Activated B cell treated with CpG ODN at 0.5 μM for 24 hours (primary cell): ENCODE measurements at regions of chr2 and their contacts with region 1.

Region 1: DNA sequence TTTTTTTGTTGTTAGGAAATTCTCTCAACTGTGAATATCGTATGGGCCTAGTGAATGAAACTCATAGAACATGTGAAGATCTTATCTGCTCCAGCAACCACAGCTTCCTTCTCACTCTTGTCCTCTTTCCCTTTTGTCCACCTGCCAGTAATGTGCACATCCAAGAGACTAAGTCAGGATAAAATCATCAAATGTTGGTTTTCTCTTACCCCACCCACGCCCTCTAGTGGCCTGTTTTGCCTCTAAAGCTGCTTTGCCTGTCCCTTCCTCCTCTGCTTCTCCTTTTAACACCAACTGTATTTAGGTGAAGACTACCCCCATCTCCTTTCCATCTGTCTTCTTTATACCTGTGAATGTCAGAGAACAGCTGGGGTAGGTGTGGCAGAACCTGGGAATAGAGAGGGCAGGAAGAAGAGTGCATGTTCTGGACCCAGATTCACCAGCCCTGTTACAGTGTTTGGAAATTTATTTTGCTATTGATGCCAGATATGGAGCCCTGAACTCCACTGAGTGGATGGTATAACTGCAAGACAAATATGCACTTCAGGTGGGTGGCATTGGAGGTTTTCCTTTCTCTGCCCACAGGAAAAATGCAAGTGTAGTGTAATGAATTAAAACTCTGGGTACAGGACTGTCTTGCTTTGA is 8.4 kb upstream of the MGAT5 start:
- DNase-seq: peak; percentile 43
- ATAC-seq: peak; percentile 35
- H3K4me3 Mint-ChIP-seq: peak overlapping the region; percentile 58
- H3K27ac Mint-ChIP-seq: peak overlapping the region; percentile 75
- H3K4me1 Mint-ChIP-seq: peaks cover 95% of the 10 kb centered on the region
- H3K27me3 Mint-ChIP-seq: no peaks in the 10 kb centered on the region
- CTCF ChIP-seq: peak; percentile 19

Region 2: DNA sequence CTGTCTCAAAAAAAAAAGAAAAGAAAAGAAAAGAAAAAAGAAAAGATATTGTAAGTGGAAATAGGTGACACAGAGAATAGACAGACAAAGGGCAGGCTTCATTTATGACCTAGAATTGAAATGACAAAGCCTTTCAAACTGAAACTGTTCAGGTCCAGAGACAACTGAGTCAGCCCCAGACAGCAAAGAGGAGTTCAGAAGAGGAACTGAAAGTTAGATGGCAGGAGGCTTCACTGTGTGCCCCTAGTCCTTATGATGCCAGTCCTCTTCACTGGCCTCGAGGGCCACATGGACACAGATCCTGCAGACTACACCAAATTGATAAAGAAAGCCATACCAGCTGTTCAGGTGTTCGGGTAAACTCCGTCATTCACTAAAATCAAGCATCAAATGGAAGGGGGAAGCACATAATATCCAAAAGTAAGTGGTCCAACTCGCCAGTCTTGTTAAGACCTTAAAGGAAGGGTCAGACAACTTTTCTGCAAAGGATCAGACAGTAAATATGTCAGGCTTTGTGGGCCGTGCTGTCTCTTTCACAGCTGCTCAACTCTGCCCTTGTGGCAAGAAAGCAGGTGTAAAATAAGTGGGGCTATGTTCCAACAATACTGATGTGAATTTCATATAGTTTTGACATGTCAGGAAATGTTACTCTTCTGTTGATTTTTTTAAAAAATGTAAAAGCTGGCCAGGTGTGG is 223.5 kb before region 1 on chr2:
- CTCF ChIA-PET with region 1: interaction called, 3 read pairs
- POLR2A ChIA-PET with region 1: no interaction called
- intact Hi-C with region 1: loop called (anchors 5 kb)
- DNase-seq: no peak
- ATAC-seq: peak; percentile 98
- H3K4me3 Mint-ChIP-seq: peak overlapping the region; percentile 35
- H3K27ac Mint-ChIP-seq: peak overlapping the region; percentile 74
- H3K4me1 Mint-ChIP-seq: peaks cover 35% of the 10 kb centered on the region
- H3K27me3 Mint-ChIP-seq: no peaks in the 10 kb centered on the region
- CTCF ChIP-seq: no peak

Region 3: GRCh38 chr2:134207564-134208209 is 37.8 kb before region 1 on chr2:
- CTCF ChIA-PET with region 1: interaction called, 27 read pairs
- POLR2A ChIA-PET with region 1: interaction called, 4 read pairs
- intact Hi-C with region 1: loop called (anchors 5 kb)
- DNase-seq: peak; percentile 42
- ATAC-seq: peak; percentile 84
- H3K4me3 Mint-ChIP-seq: no peak overlapping the region
- H3K27ac Mint-ChIP-seq: peak overlapping the region; percentile 46
- H3K4me1 Mint-ChIP-seq: peaks cover 9% of the 10 kb centered on the region
- H3K27me3 Mint-ChIP-seq: no peaks in the 10 kb centered on the region
- CTCF ChIP-seq: no peak

Region 4: GRCh38 chr2:134232868-134233727 is 12.4 kb before region 1 on chr2:
- CTCF ChIA-PET with region 1: interaction called, 23 read pairs
- POLR2A ChIA-PET with region 1: interaction called, 18 read pairs
- intact Hi-C with region 1: loop called (anchors 1 kb)
- DNase-seq: no peak
- ATAC-seq: peak; percentile 35
- H3K4me3 Mint-ChIP-seq: peak overlapping the region; percentile 52
- H3K27ac Mint-ChIP-seq: peak overlapping the region; percentile 86
- H3K4me1 Mint-ChIP-seq: peaks cover 90% of the 10 kb centered on the region
- H3K27me3 Mint-ChIP-seq: no peaks in the 10 kb centered on the region
- CTCF ChIP-seq: no peak

Region 5: GRCh38 chr2:134268265-134268664 is 22.8 kb after region 1 on chr2:
- CTCF ChIA-PET with region 1: interaction called, 28 read pairs
- POLR2A ChIA-PET with region 1: interaction called, 66 read pairs
- intact Hi-C with region 1: loop called (anchors 2 kb)
- DNase-seq: no peak
- ATAC-seq: no peak
- H3K4me3 Mint-ChIP-seq: no peak overlapping the region
- H3K27ac Mint-ChIP-seq: peak overlapping the region; percentile 84
- H3K4me1 Mint-ChIP-seq: peaks cover 90% of the 10 kb centered on the region
- H3K27me3 Mint-ChIP-seq: no peaks in the 10 kb centered on the region
- CTCF ChIP-seq: no peak

Region 6: DNA sequence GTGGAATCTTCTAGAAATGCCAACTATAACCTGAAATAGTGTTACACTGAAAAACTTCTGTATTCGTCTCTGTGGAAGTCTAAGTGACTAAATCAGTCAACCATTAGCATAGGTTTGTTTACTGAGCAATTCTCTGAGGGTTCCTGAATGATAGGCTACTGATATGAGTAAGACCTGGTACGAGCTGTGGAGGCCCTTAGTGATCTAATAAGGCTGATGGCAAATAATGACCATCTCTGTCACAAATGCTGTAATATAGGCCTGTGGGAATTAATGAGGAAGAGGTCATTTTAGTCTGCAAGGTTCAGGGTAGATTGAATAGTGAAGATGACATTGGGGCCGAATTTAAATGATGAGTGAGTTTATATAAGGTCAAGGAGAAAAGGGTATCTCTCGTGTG is 90.9 kb after region 1 on chr2:
- CTCF ChIA-PET with region 1: interaction called, 12 read pairs
- POLR2A ChIA-PET with region 1: no interaction called
- intact Hi-C with region 1: loop called (anchors 5 kb)
- DNase-seq: no peak
- ATAC-seq: peak; percentile 82
- H3K4me3 Mint-ChIP-seq: peak overlapping the region; percentile 12
- H3K27ac Mint-ChIP-seq: peak overlapping the region; percentile 57
- H3K4me1 Mint-ChIP-seq: peaks cover 64% of the 10 kb centered on the region
- H3K27me3 Mint-ChIP-seq: no peaks in the 10 kb centered on the region
- CTCF ChIP-seq: no peak

Region 7: DNA sequence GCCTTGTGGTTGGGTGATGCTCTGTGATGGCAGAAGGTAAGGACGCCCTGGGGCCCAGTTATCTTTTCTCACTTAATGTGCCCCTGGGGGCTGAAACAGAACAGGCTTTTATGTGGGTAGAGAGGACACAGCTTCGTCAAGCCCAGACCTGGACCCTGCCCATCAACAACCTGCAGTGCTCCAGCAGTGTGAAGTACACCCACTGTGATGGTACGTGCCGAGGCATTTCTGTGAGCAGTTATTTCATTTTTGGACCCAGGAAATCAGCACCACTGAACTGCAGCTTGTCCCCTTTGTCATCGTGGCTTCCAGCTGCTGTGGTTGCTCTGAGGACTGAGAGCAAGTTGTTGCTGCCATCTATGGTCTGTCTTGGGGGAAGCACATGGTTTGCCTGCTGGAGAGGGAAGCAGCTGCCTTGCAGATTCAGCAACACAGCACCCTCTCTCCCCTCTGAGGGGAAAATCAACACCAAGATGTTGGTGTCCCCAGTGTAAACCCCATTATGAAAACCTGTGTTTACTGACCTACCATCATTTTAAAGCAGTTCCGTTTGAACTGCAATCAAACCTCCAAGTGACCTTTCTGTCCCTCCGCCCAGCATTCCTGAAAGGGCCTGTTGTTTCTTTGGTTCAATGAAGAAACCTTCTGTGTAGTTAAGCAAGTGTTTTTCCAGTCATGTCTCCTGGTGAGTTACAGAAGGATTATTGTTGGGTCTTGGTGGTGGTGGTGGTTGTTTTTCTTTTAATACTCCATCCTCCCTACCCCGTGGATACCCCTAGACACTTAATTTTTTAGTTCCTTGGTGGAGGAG is 166.6 kb after region 1 on chr2:
- CTCF ChIA-PET with region 1: interaction called, 84 read pairs
- POLR2A ChIA-PET with region 1: interaction called, 5 read pairs
- intact Hi-C with region 1: loop called (anchors 1 kb)
- DNase-seq: peak; percentile 55
- ATAC-seq: peak; percentile 97
- H3K4me3 Mint-ChIP-seq: peak overlapping the region; percentile 46
- H3K27ac Mint-ChIP-seq: peak overlapping the region; percentile 86
- H3K4me1 Mint-ChIP-seq: peaks cover 46% of the 10 kb centered on the region
- H3K27me3 Mint-ChIP-seq: no peaks in the 10 kb centered on the region
- CTCF ChIP-seq: no peak